CD4-positive, alpha-beta T cell (primary cell): ENCODE measurements at regions of chr10 and their contacts with region 1.

Region 1: GRCh38 chr10:45418849-45419675 is 45.0 kb downstream of the ALOX5 start:
- DNase-seq: peak in 12 of 14 experiments; percentile 20 to 70 (median 52)
- ATAC-seq: peak; percentile 64
- H3K4me3 ChIP-seq: peak overlapping the region; percentile 70
- H3K4me3 Mint-ChIP-seq: peak overlapping the region; percentile 96
- H3K27ac ChIP-seq: peak overlapping the region; percentile 69 to 75
- H3K27ac Mint-ChIP-seq: peak overlapping the region; percentile 92
- H3K4me1 ChIP-seq: peaks cover 68% of the 10 kb centered on the region
- H3K4me1 Mint-ChIP-seq: peaks cover 45% of the 10 kb centered on the region
- H3K27me3 ChIP-seq: peaks cover 0 to 2% of the 10 kb centered on the region in 2 experiments
- H3K27me3 Mint-ChIP-seq: no peaks in the 10 kb centered on the region
- CTCF ChIP-seq: no peak

Region 2: GRCh38 chr10:45374350-45375052 is 44.6 kb before region 1 on chr10:
- CTCF ChIA-PET with region 1: no interaction called
- POLR2A ChIA-PET with region 1: no interaction called
- intact Hi-C with region 1: loop called in 1 of 2 experiments (anchors 5 kb)
- DNase-seq: peak in 2 of 14 experiments; percentile 38 to 51
- ATAC-seq: peak; percentile 27
- H3K4me3 ChIP-seq: peak overlapping the region; percentile 43
- H3K4me3 Mint-ChIP-seq: peak overlapping the region; percentile 30
- H3K27ac ChIP-seq: no peak overlapping the region
- H3K27ac Mint-ChIP-seq: no peak overlapping the region
- H3K4me1 ChIP-seq: peaks cover 29% of the 10 kb centered on the region
- H3K4me1 Mint-ChIP-seq: peaks cover 21% of the 10 kb centered on the region
- H3K27me3 ChIP-seq: peaks cover 17 to 21% of the 10 kb centered on the region in 2 experiments
- H3K27me3 Mint-ChIP-seq: peaks cover 70% of the 10 kb centered on the region
- CTCF ChIP-seq: no peak

Region 3: GRCh38 chr10:45461034-45461433 is 42.0 kb after region 1 on chr10:
- CTCF ChIA-PET with region 1: no interaction called
- POLR2A ChIA-PET with region 1: no interaction called
- intact Hi-C with region 1: no loop called
- DNase-seq: peak in 2 of 14 experiments; percentile 20 to 49
- ATAC-seq: no peak
- H3K4me3 ChIP-seq: no peak overlapping the region
- H3K4me3 Mint-ChIP-seq: no peak overlapping the region
- H3K27ac ChIP-seq: no peak overlapping the region
- H3K27ac Mint-ChIP-seq: no peak overlapping the region
- H3K4me1 ChIP-seq: peaks cover 10% of the 10 kb centered on the region
- H3K4me1 Mint-ChIP-seq: peaks cover 9% of the 10 kb centered on the region
- H3K27me3 ChIP-seq: no peaks in the 10 kb centered on the region
- H3K27me3 Mint-ChIP-seq: no peaks in the 10 kb centered on the region
- CTCF ChIP-seq: no peak